B cell (primary cell): ENCODE measurements at regions of chr5 and their contacts with region 1.

Region 1: GRCh38 chr5:81506900-81507588 is 113.1 kb upstream of the ACOT12 start:
- DNase-seq: peak; percentile 79
- ATAC-seq: peak; percentile 100
- H3K4me3 ChIP-seq: no peak overlapping the region
- H3K4me3 Mint-ChIP-seq: no peak overlapping the region
- H3K27ac ChIP-seq: no peak overlapping the region
- H3K27ac Mint-ChIP-seq: no peak overlapping the region
- H3K4me1 ChIP-seq: no peaks in the 10 kb centered on the region
- H3K4me1 Mint-ChIP-seq: peaks cover 4% of the 10 kb centered on the region
- H3K27me3 ChIP-seq: no peaks in the 10 kb centered on the region
- H3K27me3 Mint-ChIP-seq: no peaks in the 10 kb centered on the region
- CTCF ChIP-seq: peak; percentile 80

Region 2: GRCh38 chr5:81469676-81470075 is 37.4 kb before region 1 on chr5:
- CTCF ChIA-PET with region 1: interaction called, 3 read pairs
- POLR2A ChIA-PET with region 1: no interaction called
- intact Hi-C with region 1: loop called (anchors 5 kb)
- DNase-seq: no peak
- ATAC-seq: no peak
- H3K4me3 ChIP-seq: no peak overlapping the region
- H3K4me3 Mint-ChIP-seq: no peak overlapping the region
- H3K27ac ChIP-seq: no peak overlapping the region
- H3K27ac Mint-ChIP-seq: no peak overlapping the region
- H3K4me1 ChIP-seq: no peaks in the 10 kb centered on the region
- H3K4me1 Mint-ChIP-seq: no peaks in the 10 kb centered on the region
- H3K27me3 ChIP-seq: no peaks in the 10 kb centered on the region
- H3K27me3 Mint-ChIP-seq: no peaks in the 10 kb centered on the region
- CTCF ChIP-seq: no peak

Region 3: DNA sequence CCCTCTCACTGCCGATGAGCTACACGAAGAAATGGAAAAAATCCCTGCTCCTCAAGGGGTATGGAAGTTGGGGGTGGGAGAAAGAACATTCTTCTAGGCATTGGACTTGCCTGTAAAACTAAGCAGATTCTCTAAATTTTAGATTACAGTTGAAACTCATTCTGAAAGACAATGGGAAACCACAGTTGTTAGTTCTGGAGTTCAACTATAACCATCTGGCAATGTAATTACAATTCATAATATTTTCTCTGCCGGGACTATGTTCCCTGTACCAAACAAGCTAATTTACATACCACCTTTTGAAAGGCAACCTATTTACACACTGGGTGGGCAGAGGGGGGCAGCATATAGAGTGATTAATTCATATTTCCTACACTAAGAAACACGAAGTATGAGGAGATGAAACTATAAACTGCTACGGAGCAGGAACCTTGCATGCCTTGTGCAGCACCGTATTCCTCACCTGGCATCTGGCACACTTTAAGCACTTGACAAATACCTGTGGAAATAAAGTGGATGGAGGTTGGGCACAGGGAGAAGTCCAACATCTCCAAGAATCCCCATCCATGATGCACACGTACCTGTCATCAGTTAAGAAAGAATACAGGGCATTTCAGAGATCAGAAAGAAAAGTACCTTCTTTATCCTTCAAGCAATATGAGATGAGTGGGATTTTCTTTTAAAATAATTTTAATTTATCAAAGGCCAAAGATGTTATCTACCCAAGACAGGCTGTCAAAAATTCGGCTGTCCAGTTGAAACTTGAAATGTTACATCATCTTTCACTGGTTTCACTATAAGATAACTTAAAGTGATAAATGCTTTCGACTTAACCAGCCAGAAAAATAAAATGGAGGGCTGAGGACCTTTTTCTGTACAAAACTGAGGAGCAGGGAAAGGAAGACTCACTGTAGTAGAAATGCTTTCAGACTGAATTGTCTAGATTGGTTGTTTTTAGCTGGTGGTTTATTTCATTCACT is 189.7 kb after region 1 on chr5:
- CTCF ChIA-PET with region 1: no interaction called
- POLR2A ChIA-PET with region 1: no interaction called
- intact Hi-C with region 1: no loop called
- DNase-seq: no peak
- ATAC-seq: no peak
- H3K4me3 ChIP-seq: no peak overlapping the region
- H3K4me3 Mint-ChIP-seq: no peak overlapping the region
- H3K27ac ChIP-seq: peak overlapping the region in 1 of 2 donors; percentile 4
- H3K27ac Mint-ChIP-seq: peak overlapping the region; percentile 5
- H3K4me1 ChIP-seq: peaks cover 0 to 5% of the 10 kb centered on the region in 2 donors
- H3K4me1 Mint-ChIP-seq: peaks cover 32% of the 10 kb centered on the region
- H3K27me3 ChIP-seq: no peaks in the 10 kb centered on the region
- H3K27me3 Mint-ChIP-seq: no peaks in the 10 kb centered on the region
- CTCF ChIP-seq: no peak

Region 4: DNA sequence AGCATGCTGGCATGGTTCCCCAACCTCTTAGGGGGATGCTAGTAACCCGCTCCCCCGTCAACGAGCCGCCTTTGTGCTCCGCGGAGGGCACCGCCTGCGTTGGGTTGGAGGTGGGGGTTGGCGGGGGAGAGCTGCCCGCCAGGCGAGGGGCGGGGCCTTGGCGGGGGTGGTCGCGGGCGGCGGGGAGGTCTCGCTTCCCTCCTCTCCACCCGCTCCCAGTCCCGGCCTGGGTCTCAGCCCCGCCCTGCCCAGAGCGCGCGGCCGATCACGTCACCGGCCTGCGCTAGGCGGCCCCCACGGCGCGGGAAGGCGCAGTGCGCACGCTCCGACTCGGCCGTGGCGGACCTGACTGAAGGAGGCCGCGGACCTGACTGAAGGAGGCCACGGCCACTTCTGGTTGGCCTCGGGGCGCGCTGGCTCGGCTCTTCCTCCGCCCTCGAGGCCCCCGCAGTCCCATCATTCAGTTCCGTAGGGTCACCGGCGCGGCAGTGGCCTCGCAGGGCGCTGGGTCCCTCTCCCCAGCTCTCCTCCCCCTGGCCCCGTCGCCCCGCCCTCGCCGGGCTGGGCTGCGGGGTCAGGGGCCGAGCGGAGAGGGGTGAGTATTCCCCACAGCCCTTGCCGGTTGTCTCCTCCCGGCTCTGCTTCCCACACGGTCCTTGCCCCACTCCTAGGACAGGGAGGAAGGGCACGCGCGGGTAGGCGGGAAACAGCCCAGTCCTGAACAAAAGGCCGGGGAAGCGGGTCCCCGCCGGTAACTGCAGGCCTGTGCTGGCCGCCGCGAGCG is 464.9 kb after region 1 on chr5 and contains the start of gene ATG10:
- CTCF ChIA-PET with region 1: interaction called, 3 read pairs
- POLR2A ChIA-PET with region 1: no interaction called
- intact Hi-C with region 1: loop called (anchors 2 kb)
- DNase-seq: peak; percentile 94
- ATAC-seq: peak; percentile 91
- H3K4me3 ChIP-seq: peak within 1 kb of the TSS; percentile 70 to 99 (median 80)
- H3K4me3 Mint-ChIP-seq: peak within 1 kb of the TSS; percentile 90
- H3K27ac ChIP-seq: peak within 1 kb of the TSS; percentile 94 to 95
- H3K27ac Mint-ChIP-seq: peak within 1 kb of the TSS; percentile 92
- H3K4me1 ChIP-seq: peaks cover 4 to 7% of the 10 kb centered on the region in 2 donors
- H3K4me1 Mint-ChIP-seq: peaks cover 12% of the 10 kb centered on the region
- H3K27me3 ChIP-seq: no peaks in the 10 kb centered on the region
- H3K27me3 Mint-ChIP-seq: no peaks in the 10 kb centered on the region
- CTCF ChIP-seq: no peak
- total RNA-seq, gene ATG10: 9.8 and 11.6 TPM in 2 replicates

Region 5: GRCh38 chr5:82174128-82174918 is 667.3 kb after region 1 on chr5:
- CTCF ChIA-PET with region 1: interaction called, 3 read pairs
- POLR2A ChIA-PET with region 1: no interaction called
- intact Hi-C with region 1: loop called (anchors 2 kb)
- DNase-seq: peak; percentile 74
- ATAC-seq: peak; percentile 88
- H3K4me3 ChIP-seq: no peak overlapping the region
- H3K4me3 Mint-ChIP-seq: peak overlapping the region; percentile 31
- H3K27ac ChIP-seq: peak overlapping the region in 1 of 2 donors; percentile 32
- H3K27ac Mint-ChIP-seq: peak overlapping the region; percentile 60
- H3K4me1 ChIP-seq: peaks cover 9% of the 10 kb centered on the region in 2 donors
- H3K4me1 Mint-ChIP-seq: peaks cover 18% of the 10 kb centered on the region
- H3K27me3 ChIP-seq: no peaks in the 10 kb centered on the region
- H3K27me3 Mint-ChIP-seq: no peaks in the 10 kb centered on the region
- CTCF ChIP-seq: peak; percentile 71

Region 6: GRCh38 chr5:82278095-82278918 is 771.3 kb after region 1 on chr5 and contains the start of gene RPS23:
- CTCF ChIA-PET with region 1: no interaction called
- POLR2A ChIA-PET with region 1: no interaction called
- intact Hi-C with region 1: loop called (anchors 2 kb)
- DNase-seq: peak; percentile 93
- ATAC-seq: peak; percentile 95
- H3K4me3 ChIP-seq: peak within 1 kb of the TSS; percentile 80 to 98 (median 90)
- H3K4me3 Mint-ChIP-seq: peak within 1 kb of the TSS; percentile 91
- H3K27ac ChIP-seq: peak within 1 kb of the TSS; percentile 82 to 89
- H3K27ac Mint-ChIP-seq: peak within 1 kb of the TSS; percentile 94
- H3K4me1 ChIP-seq: peaks cover 26 to 27% of the 10 kb centered on the region in 2 donors
- H3K4me1 Mint-ChIP-seq: peaks cover 37% of the 10 kb centered on the region
- H3K27me3 ChIP-seq: no peaks in the 10 kb centered on the region
- H3K27me3 Mint-ChIP-seq: no peaks in the 10 kb centered on the region
- CTCF ChIP-seq: no peak
- total RNA-seq, gene RPS23: 3,327 and 3,420 TPM in 2 replicates